ENCODE measurements at regions of chr21 and their contacts with region 1.

Region 1: GRCh38 chr21:20883408-20883800 is 114.8 kb upstream of the NCAM2 start:
- DNase-seq: no peak
- H3K4me3 ChIP-seq: no peak overlapping the region
- H3K27ac ChIP-seq: no peak overlapping the region
- H3K4me1 ChIP-seq: no peaks in the 10 kb centered on the region
- H3K27me3 ChIP-seq: no peaks in the 10 kb centered on the region
- CTCF ChIP-seq: no peak
- EP300 ChIP-seq: no peak
- POLR2A ChIP-seq: no peak

Region 2: DNA sequence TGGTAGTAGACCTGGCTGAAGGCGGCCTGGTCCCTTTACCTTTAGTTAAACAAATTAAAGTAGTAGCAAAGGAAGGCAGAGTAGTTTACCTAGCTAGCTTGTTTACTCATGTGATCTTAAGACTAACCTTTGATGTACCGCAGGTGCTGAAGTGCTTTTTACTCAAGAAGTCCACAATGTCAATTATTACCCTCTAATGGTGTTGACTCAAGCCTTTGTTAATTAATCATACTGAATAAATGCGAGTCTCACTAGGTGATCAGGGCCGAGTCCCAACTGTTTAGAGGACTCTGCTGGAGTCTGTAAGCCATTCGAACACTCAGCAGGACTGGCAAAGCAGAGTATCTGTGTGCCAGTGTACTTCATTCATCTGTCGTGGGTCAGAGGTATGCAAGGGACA is 266.3 kb before region 1 on chr21:
- intact Hi-C with region 1: no loop called
- DNase-seq: no peak
- H3K4me3 ChIP-seq: no peak overlapping the region
- H3K27ac ChIP-seq: no peak overlapping the region
- H3K4me1 ChIP-seq: no peaks in the 10 kb centered on the region
- H3K27me3 ChIP-seq: no peaks in the 10 kb centered on the region
- CTCF ChIP-seq: no peak
- EP300 ChIP-seq: no peak
- POLR2A ChIP-seq: no peak

Region 3: GRCh38 chr21:20902511-20902910 is 19.1 kb after region 1 on chr21:
- intact Hi-C with region 1: loop called in 1 of 4 experiments (anchors 2 kb)
- DNase-seq: no peak
- H3K4me3 ChIP-seq: no peak overlapping the region
- H3K27ac ChIP-seq: no peak overlapping the region
- H3K4me1 ChIP-seq: no peaks in the 10 kb centered on the region
- H3K27me3 ChIP-seq: no peaks in the 10 kb centered on the region
- CTCF ChIP-seq: no peak
- EP300 ChIP-seq: no peak
- POLR2A ChIP-seq: no peak

Region 4: DNA sequence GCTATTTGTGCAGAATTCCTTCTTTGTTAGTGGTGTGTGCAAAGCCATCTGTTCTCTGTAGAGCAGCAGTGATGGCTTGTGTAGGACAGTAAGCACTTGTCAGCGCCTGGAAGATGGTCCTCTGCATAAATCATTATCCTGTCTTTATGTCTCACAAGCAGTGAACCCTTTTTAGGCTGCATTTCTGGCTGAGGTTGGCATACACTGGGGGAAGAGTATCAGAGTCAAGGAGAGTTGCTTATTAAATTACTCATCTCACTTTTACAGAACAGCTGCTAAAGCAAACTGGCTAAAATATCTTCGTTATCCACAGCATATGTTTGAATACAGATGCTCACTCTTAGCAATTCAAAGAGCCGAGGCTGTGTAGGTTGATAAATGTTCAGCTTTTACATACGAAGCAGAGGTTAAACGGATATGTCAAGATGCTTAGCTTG is 60.2 kb after region 1 on chr21:
- intact Hi-C with region 1: no loop called
- DNase-seq: no peak
- H3K4me3 ChIP-seq: no peak overlapping the region
- H3K27ac ChIP-seq: no peak overlapping the region
- H3K4me1 ChIP-seq: no peaks in the 10 kb centered on the region
- H3K27me3 ChIP-seq: no peaks in the 10 kb centered on the region
- CTCF ChIP-seq: no peak
- EP300 ChIP-seq: no peak
- POLR2A ChIP-seq: no peak

Region 5: DNA sequence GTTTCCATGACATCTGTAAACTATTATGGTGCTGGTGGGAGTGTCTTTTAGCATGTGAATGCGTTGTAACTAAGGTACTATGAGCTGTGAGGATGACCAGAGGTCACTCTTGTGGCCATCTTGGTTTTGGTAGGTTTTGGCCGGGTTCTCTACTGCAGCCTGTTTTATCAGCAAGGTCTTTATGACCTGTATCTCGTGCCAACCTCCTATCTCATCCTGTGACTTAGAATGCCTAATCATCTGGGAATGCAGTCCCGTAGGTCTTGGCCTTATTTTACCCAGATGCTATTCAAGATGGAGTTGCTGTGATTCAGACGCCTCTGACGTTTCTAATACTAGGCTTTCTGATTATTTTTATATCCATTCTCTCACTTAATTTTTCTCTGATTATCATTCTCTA is 124.2 kb after region 1 on chr21:
- intact Hi-C with region 1: no loop called
- DNase-seq: no peak
- H3K4me3 ChIP-seq: no peak overlapping the region
- H3K27ac ChIP-seq: no peak overlapping the region
- H3K4me1 ChIP-seq: no peaks in the 10 kb centered on the region
- H3K27me3 ChIP-seq: no peaks in the 10 kb centered on the region
- CTCF ChIP-seq: no peak
- EP300 ChIP-seq: no peak
- POLR2A ChIP-seq: no peak